Activated T-helper 2 cell treated with anti-CD3 and anti-CD28 coated beads, Interferon-gamma antibody, Interleukin-2, Interleukin-4, amounts not matched to agents 10 μg/mL and 5 μg/mL and 100 μg/mL, durations not matched to agents 14 hours and 24 hours and 36 hours (primary cell): ENCODE measurements at regions of chr6 and their contacts with region 1.

Region 1: GRCh38 chr6:87645080-87645479 is 55.1 kb downstream of the ORC3 start:
- DNase-seq: no peak
- H3K4me3 Mint-ChIP-seq: peak overlapping the region; percentile 65
- H3K27ac Mint-ChIP-seq: peak overlapping the region; percentile 79
- H3K4me1 Mint-ChIP-seq: peaks cover 13% of the 10 kb centered on the region
- H3K27me3 Mint-ChIP-seq: no peaks in the 10 kb centered on the region

Region 2: DNA sequence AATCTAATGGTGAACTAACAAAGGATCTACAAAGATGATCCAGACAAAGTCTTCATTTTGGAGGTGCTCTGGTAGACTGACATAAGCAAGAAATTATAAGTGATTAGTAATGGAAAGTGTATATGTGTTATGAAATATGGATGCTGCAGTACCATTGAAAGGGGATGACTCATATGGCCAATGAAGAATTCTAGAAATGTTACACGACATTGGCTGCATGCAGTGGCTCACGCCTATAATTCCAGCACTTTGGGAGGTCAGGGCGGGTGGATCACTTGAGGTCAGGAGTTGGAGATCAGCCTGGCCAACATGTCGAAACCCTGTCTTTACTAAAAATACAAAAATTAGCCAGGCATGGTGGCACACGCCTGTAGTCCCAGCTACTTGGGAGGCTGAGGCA is 213.8 kb before region 1 on chr6:
- intact Hi-C with region 1: no loop called
- DNase-seq: no peak
- H3K4me3 Mint-ChIP-seq: no peak overlapping the region
- H3K27ac Mint-ChIP-seq: no peak overlapping the region
- H3K4me1 Mint-ChIP-seq: no peaks in the 10 kb centered on the region
- H3K27me3 Mint-ChIP-seq: peaks cover 7% of the 10 kb centered on the region

Region 3: DNA sequence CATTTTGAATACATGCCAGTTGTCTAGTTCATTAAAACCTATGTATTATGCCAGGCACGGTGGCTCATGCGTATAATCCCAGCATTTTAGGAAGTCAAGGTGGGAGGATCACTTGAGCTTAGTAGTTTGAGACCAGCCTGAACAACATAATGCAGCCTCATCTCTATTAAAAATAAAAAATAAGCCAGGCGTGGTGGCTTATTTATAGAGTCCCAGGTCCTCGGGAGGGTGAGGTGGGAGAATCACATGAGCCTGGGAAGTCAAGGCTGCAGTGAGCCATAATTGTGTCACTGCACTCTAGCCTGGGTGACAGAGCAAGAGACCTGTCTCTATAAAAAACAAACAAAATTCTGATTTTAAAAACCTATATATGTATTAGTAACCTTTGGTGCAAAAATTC is 27.7 kb before region 1 on chr6:
- intact Hi-C with region 1: loop called (anchors 1 kb)
- DNase-seq: no peak
- H3K4me3 Mint-ChIP-seq: no peak overlapping the region
- H3K27ac Mint-ChIP-seq: no peak overlapping the region
- H3K4me1 Mint-ChIP-seq: no peaks in the 10 kb centered on the region
- H3K27me3 Mint-ChIP-seq: no peaks in the 10 kb centered on the region